H1 (cell line): ENCODE measurements at regions of chr17 and their contacts with region 1.

Region 1: GRCh38 chr17:82297714-82298537 is 19.5 kb downstream of the CD7 start:
- DNase-seq: no peak
- H3K4me3 ChIP-seq: no peak overlapping the region
- H3K27ac ChIP-seq: no peak overlapping the region
- H3K4me1 ChIP-seq: peaks cover 0 to 20% (median 4%) of the 10 kb centered on the region in 4 experiments; a peak in 5 of 7 replicates
- H3K27me3 ChIP-seq: peaks cover 0 to 7% (median 4%) of the 10 kb centered on the region in 4 experiments; a peak in 3 of 7 replicates
- CTCF ChIP-seq: no peak
- EP300 ChIP-seq: no peak
- POLR2A ChIP-seq: no peak
- RAD21 ChIP-seq: no peak

Region 2: GRCh38 chr17:82200743-82201497 is 97.0 kb before region 1 on chr17:
- CTCF ChIA-PET with region 1: no interaction called
- POLR2A ChIA-PET with region 1: no interaction called
- DNase-seq: no peak
- H3K4me3 ChIP-seq: no peak overlapping the region
- H3K27ac ChIP-seq: no peak overlapping the region
- H3K4me1 ChIP-seq: peaks cover 0 to under 1% (median under 1%) of the 10 kb centered on the region in 4 experiments; a peak in 1 of 7 replicates
- H3K27me3 ChIP-seq: no peaks in the 10 kb centered on the region
- CTCF ChIP-seq: no peak
- EP300 ChIP-seq: no peak
- POLR2A ChIP-seq: no peak
- RAD21 ChIP-seq: no peak

Region 3: DNA sequence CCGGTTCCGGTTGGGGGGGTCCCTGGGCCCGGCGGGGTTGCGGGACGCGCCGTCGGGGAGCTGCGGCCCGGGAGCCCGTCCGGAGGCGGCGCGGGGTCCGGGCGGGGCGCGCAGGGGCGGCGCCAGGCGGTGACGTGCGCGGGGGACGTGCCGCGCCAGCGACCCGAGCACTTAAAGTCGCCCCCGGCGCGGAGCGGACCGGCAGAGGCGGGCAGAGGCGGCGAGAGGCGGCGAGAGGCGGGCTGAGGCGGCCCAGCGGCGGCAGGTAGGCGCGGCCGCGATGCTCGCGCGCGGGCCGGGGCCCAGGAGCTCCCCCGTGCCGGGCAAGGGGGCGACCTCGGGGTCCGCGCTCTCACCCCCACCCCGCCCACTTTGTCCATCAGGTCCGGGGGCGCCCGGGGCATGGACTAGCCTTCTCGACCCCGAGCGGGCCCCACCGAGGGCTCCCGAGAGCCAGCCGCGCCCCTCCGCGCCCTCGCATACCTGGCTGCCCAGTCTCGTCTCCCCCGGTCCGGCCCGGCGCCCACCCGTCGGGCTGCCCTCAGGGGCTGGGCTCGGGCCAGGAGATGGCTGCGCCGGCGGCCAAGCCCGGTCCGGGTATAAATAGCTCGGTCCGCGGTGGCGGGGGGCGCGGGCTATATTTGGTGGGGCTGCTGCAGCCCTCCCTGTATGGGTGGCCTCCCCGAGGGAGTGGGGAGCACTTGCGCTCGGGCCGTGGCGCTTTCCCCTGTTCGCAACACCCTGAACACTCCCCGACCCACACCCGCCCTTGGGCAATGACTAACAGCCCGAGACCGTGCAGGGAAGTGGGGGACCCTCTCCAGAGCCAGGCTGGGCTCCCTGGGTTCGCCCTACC is 68.9 kb before region 1 on chr17 and contains the start of gene SLC16A3:
- CTCF ChIA-PET with region 1: no interaction called
- POLR2A ChIA-PET with region 1: no interaction called
- DNase-seq: peak in 1 of 2 experiments; percentile 68
- H3K4me3 ChIP-seq: peak within 1 kb of the TSS; percentile 27 to 62 (median 37); a peak in 7 of 8 replicates
- H3K27ac ChIP-seq: no peak within 1 kb of the TSS
- H3K4me1 ChIP-seq: peaks cover 0 to 16% (median 4%) of the 10 kb centered on the region in 4 experiments; a peak in 5 of 7 replicates
- H3K27me3 ChIP-seq: peaks cover 28 to 68% (median 58%) of the 10 kb centered on the region in 4 experiments
- CTCF ChIP-seq: no peak
- EP300 ChIP-seq: no peak
- POLR2A ChIP-seq: 0 out of 3 replicates have a peak, but pooled peaks of 1 of the 2 experiments have one; percentile 46
- RAD21 ChIP-seq: no peak
- total RNA-seq, gene SLC16A3: 3.6 and 3.8 TPM in 2 replicates

Region 4: GRCh38 chr17:82315703-82316358 is 17.9 kb after region 1 on chr17:
- CTCF ChIA-PET with region 1: interaction called, 32 read pairs
- POLR2A ChIA-PET with region 1: interaction called, 4 read pairs
- DNase-seq: no peak
- H3K4me3 ChIP-seq: peak overlapping the region in 3 of 4 experiments; percentile 7 to 48 (median 9); a peak in 2 of 8 replicates
- H3K27ac ChIP-seq: no peak overlapping the region
- H3K4me1 ChIP-seq: peaks cover 0 to 5% (median 4%) of the 10 kb centered on the region in 4 experiments; a peak in 5 of 7 replicates
- H3K27me3 ChIP-seq: no peaks in the 10 kb centered on the region; a peak in 3 of 7 replicates
- CTCF ChIP-seq: no peak
- EP300 ChIP-seq: no peak
- POLR2A ChIP-seq: no peak
- RAD21 ChIP-seq: no peak; a peak in 1 of 4 replicates

Region 5: GRCh38 chr17:82320956-82321927 is 23.3 kb after region 1 on chr17:
- CTCF ChIA-PET with region 1: interaction called, 32 read pairs
- POLR2A ChIA-PET with region 1: interaction called, 3 read pairs
- DNase-seq: peak in 1 of 2 experiments; percentile 89
- H3K4me3 ChIP-seq: 0 out of 8 replicates have a peak overlapping the region, but pooled peaks of 1 of the 4 experiments have one; percentile 27
- H3K27ac ChIP-seq: no peak overlapping the region
- H3K4me1 ChIP-seq: no peaks in the 10 kb centered on the region; a peak in 4 of 7 replicates
- H3K27me3 ChIP-seq: no peaks in the 10 kb centered on the region; a peak in 2 of 7 replicates
- CTCF ChIP-seq: peak; percentile 72 to 89 (median 75)
- EP300 ChIP-seq: peak in 1 of 2 experiments; percentile 58; a peak in 1 of 3 replicates
- POLR2A ChIP-seq: no peak
- RAD21 ChIP-seq: peak; percentile 65 to 80

Region 6: GRCh38 chr17:82332669-82333278 is 34.8 kb after region 1 on chr17:
- CTCF ChIA-PET with region 1: interaction called, 11 read pairs
- POLR2A ChIA-PET with region 1: interaction called, 3 read pairs
- DNase-seq: no peak
- H3K4me3 ChIP-seq: peak overlapping the region; percentile 7 to 58 (median 32); a peak in 6 of 8 replicates
- H3K27ac ChIP-seq: no peak overlapping the region
- H3K4me1 ChIP-seq: peaks cover 0 to 25% (median 17%) of the 10 kb centered on the region in 4 experiments; a peak in 6 of 7 replicates
- H3K27me3 ChIP-seq: peaks cover 28 to 56% (median 53%) of the 10 kb centered on the region in 4 experiments
- CTCF ChIP-seq: no peak
- EP300 ChIP-seq: no peak
- POLR2A ChIP-seq: no peak
- RAD21 ChIP-seq: no peak